Posterior vena cava (tissue), 2 donors: ENCODE measurements at regions of chr14 and their contacts with region 1.

Region 1: DNA sequence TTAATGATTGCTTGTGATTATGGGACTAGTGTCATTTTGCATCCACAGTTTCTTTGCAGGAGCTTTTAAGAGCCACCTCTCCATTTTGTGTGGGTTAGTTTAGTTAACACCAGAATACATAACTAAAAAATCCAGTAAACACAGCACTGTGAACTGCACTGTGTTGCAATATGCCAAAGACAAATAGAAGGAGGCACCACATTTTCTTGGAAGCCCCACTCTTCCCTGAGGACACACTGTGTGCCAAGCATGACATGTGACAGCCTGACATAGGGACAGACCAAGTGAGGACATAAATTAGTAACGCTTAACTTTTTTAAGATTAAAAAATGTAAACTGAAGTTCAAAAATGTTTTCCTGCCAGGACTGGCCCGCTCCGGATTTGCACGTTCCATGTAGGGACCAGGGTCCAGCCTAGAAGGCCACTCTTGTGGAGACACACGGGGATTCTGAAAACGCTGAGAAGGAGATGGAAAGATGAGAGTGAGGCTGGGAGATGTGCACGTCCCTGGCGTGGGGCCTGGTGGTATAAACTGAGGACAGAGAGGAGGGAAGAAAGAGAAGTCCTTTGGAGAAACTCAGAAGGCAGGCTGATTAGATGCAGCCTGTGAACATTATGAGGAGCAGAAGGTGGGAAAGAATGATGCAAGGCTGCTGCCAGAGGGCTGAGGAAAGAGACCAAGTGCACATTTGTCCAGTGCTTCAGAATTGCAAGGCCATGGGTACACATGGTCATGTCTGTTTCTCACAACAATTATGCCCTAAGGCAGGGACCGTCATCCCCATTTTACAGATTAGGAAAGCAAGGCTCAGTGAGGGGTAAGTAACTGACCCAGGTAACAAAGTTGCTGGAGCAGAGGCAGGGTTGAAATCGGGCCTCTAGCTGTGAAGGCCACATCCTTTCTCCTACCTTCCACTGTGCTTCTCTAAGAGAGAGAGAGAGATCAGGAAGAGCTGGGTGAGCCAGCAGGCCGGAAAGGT is 45.1 kb downstream of the ISCA2 start:
- DNase-seq: peak; percentile 48

Region 2: GRCh38 chr14:75591331-75591946 is 1052.7 kb after region 1 on chr14:
- intact Hi-C with region 1: no loop called
- DNase-seq: no peak

Region 3: GRCh38 chr14:75837151-75837787 is 1298.6 kb after region 1 on chr14:
- intact Hi-C with region 1: loop called in 1 of 2 experiments (anchors 5 kb)
- DNase-seq: no peak